ENCODE measurements at regions of chr18 and their contacts with region 1.

Region 1: DNA sequence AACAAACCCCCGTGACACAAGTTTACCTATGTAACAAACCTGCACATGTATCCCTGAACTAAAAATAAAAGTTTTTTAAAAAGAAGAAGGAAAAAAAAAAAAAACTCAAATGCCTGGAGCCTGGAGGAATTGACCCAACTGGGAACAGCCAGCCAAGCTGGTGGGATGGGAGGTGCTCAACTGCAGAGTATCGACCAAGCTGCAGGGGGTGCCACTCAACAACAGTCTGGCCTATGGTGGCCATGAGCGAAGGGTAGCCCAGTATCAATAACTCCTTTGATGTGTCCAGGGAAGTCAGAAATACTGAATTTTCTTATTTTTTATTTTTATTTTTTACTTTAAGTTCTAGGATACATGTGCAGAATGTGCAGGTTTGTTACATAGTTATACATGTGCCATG is 310.3 kb upstream of the DLGAP1 start:
- DNase-seq: no peak
- ATAC-seq: no peak
- H3K4me3 ChIP-seq: no peak overlapping the region
- H3K4me3 Mint-ChIP-seq: no peak overlapping the region
- H3K27ac ChIP-seq: no peak overlapping the region
- H3K27ac Mint-ChIP-seq: no peak overlapping the region
- H3K4me1 ChIP-seq: no peaks in the 10 kb centered on the region
- H3K4me1 Mint-ChIP-seq: no peaks in the 10 kb centered on the region
- H3K27me3 ChIP-seq: no peaks in the 10 kb centered on the region
- H3K27me3 Mint-ChIP-seq: no peaks in the 10 kb centered on the region
- CTCF ChIP-seq: no peak

Region 2: GRCh38 chr18:3898861-3899613 is 866.4 kb before region 1 on chr18:
- CTCF ChIA-PET with region 1: no interaction called
- POLR2A ChIA-PET with region 1: no interaction called
- intact Hi-C with region 1: loop called in 1 of 2 experiments (anchors 5 kb)
- DNase-seq: no peak
- ATAC-seq: no peak
- H3K4me3 ChIP-seq: no peak overlapping the region
- H3K4me3 Mint-ChIP-seq: no peak overlapping the region
- H3K27ac ChIP-seq: no peak overlapping the region
- H3K27ac Mint-ChIP-seq: no peak overlapping the region
- H3K4me1 ChIP-seq: no peaks in the 10 kb centered on the region
- H3K4me1 Mint-ChIP-seq: no peaks in the 10 kb centered on the region
- H3K27me3 ChIP-seq: no peaks in the 10 kb centered on the region
- H3K27me3 Mint-ChIP-seq: peaks cover 13% of the 10 kb centered on the region
- CTCF ChIP-seq: no peak

Region 3: GRCh38 chr18:4842287-4842686 is 76.9 kb after region 1 on chr18:
- CTCF ChIA-PET with region 1: no interaction called
- POLR2A ChIA-PET with region 1: no interaction called
- intact Hi-C with region 1: no loop called
- DNase-seq: no peak
- ATAC-seq: no peak
- H3K4me3 ChIP-seq: no peak overlapping the region
- H3K4me3 Mint-ChIP-seq: no peak overlapping the region
- H3K27ac ChIP-seq: no peak overlapping the region
- H3K27ac Mint-ChIP-seq: no peak overlapping the region
- H3K4me1 ChIP-seq: no peaks in the 10 kb centered on the region
- H3K4me1 Mint-ChIP-seq: no peaks in the 10 kb centered on the region
- H3K27me3 ChIP-seq: no peaks in the 10 kb centered on the region
- H3K27me3 Mint-ChIP-seq: no peaks in the 10 kb centered on the region
- CTCF ChIP-seq: no peak

Measured in CD8-positive, alpha-beta T cell (primary cell).